ENCODE measurements at regions of chr7 and their contacts with region 1.

Region 1: DNA sequence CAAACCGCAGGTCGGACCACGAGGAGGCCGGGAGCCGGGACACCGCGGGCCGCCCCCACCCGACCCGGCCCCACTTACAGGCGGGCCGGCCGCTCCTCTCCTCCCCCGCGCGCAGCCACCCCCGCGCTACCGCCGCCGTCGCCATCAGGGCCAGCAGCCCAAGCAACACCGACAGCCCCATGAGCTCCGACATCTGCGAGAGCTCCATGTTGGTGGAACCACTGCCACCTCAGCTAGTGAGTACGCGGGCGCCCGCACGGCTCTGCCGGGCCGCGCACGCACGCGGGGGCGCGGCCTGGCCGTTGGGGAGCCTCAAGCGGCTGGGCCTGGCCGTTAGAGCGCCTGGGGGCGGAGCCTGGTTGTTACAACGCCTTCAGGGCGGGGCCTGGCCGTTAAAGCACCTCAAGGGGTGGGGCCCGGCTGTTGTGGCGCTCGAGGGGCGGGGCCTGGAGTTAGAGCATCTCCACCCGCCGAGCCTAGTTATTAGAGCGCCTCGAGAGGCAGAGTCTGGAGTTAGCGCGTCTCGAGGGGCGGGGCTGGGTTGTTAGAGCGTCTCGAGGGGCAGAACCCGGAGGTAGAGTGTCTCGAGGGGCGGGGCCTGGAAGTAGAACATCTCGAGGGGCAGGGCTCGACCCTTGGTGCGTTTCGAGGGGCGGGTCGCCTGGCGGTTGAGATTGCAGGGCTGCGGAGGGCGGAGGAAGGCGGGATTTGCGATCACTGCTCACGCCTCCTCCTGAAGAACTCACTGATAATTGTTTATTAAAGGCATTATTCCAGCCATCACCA is at the start of gene TBL2:
- DNase-seq: peak; percentile 100
- ATAC-seq: peak; percentile 94
- H3K4me3 Mint-ChIP-seq: peak within 1 kb of the TSS; percentile 90
- H3K27ac Mint-ChIP-seq: peak within 1 kb of the TSS; percentile 96
- H3K4me1 Mint-ChIP-seq: peaks cover 21% of the 10 kb centered on the region
- H3K27me3 Mint-ChIP-seq: no peaks in the 10 kb centered on the region
- CTCF ChIP-seq: no peak
- total RNA-seq, gene TBL2: 29.6 to 30.7 TPM

Region 2: GRCh38 chr7:73522105-73522872 is 56.2 kb before region 1 on chr7 and contains the start of gene BAZ1B:
- CTCF ChIA-PET with region 1: interaction called, 4 read pairs
- POLR2A ChIA-PET with region 1: interaction called, 32 read pairs
- intact Hi-C with region 1: loop called (anchors 5 kb)
- DNase-seq: peak; percentile 98
- ATAC-seq: peak; percentile 93
- H3K4me3 Mint-ChIP-seq: peak within 1 kb of the TSS; percentile 90
- H3K27ac Mint-ChIP-seq: peak within 1 kb of the TSS; percentile 95
- H3K4me1 Mint-ChIP-seq: peaks cover 52% of the 10 kb centered on the region
- H3K27me3 Mint-ChIP-seq: no peaks in the 10 kb centered on the region
- CTCF ChIP-seq: no peak
- total RNA-seq, gene BAZ1B: 82.4 to 82.6 TPM

Region 3: DNA sequence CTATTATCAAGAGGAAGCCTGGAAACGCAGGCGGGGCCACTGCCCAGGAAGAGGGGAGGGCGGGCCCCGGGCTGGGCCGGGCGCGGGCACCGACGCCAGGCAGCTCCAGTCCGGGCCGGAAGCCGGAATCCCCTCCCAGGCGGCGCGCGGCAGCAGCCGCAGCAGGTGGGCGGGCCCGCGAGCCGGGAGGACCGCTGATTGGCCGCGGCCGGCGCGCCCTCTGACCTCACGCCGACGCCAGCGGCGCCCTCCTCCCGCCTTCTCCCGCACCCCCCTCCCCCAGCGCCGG is 21.5 kb before region 1 on chr7:
- CTCF ChIA-PET with region 1: interaction called, 3 read pairs
- POLR2A ChIA-PET with region 1: interaction called, 21 read pairs
- intact Hi-C with region 1: no loop called
- DNase-seq: peak; percentile 93
- ATAC-seq: peak; percentile 92
- H3K4me3 Mint-ChIP-seq: peak overlapping the region; percentile 88
- H3K27ac Mint-ChIP-seq: peak overlapping the region; percentile 93
- H3K4me1 Mint-ChIP-seq: peaks cover 40% of the 10 kb centered on the region
- H3K27me3 Mint-ChIP-seq: no peaks in the 10 kb centered on the region
- CTCF ChIP-seq: no peak

Region 4: GRCh38 chr7:73565675-73566340 is 12.7 kb before region 1 on chr7:
- CTCF ChIA-PET with region 1: interaction called, 7 read pairs
- POLR2A ChIA-PET with region 1: interaction called, 15 read pairs
- intact Hi-C with region 1: no loop called
- DNase-seq: no peak
- ATAC-seq: peak; percentile 45
- H3K4me3 Mint-ChIP-seq: peak overlapping the region; percentile 57
- H3K27ac Mint-ChIP-seq: peak overlapping the region; percentile 12
- H3K4me1 Mint-ChIP-seq: peaks cover 31% of the 10 kb centered on the region
- H3K27me3 Mint-ChIP-seq: no peaks in the 10 kb centered on the region
- CTCF ChIP-seq: no peak

Measured in activated CD8-positive, alpha-beta T cell treated with anti-CD3 and anti-CD28 coated beads for 36 hours (primary cell).